ENCODE measurements at regions of chr14 and their contacts with region 1.

Region 1: GRCh38 chr14:72893636-72894321 is at the start of gene DPF3:
- DNase-seq: peak; percentile 99
- H3K4me3 ChIP-seq: peak within 1 kb of the TSS; percentile 97
- H3K27ac ChIP-seq: no peak within 1 kb of the TSS
- H3K4me1 ChIP-seq: peaks cover 18% of the 10 kb centered on the region
- H3K27me3 ChIP-seq: no peaks in the 10 kb centered on the region
- total RNA-seq, gene DPF3: 7.9 and 13.4 TPM in 2 replicates

Region 2: DNA sequence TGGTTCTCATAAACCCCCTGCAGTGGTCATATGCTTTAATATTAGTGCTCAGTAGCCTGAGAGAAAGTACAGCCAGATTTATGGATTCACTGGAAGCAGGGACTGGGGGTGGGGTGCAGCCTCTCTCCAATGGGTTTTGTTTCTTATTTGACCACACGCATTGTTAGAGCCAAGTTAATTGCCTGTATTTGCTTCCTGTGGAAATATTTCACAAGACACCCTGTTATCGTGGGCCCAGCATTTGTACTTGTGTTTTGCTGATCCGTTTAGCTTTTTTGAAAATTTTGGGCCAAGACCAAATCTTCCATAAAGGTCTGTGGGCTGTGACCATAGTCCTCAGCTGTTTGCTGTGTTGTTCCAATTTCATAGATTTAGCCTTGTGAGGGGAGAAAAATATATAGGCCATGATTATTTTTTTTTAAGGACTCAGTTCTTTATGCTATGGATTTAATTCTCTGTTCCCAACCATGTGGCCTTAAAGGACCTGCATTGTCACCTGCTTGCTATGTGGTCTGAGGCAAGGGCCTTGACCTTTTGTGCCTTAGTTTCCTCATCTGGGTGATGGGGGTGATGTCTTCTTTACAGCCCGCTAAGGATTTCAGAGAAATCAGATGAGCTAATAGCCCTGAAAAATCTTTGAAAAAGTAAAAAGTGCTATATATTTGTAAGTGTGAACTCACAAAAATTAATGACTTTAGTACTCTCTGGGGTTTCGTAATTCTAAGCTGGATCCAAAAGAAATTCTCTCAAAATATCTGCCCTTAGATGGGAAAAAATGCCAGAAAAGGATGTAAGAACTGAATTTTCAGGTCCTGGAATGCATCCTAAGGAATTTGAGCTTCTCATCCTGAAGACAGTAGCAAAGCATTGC is 370.1 kb before region 1 on chr14:
- in situ Hi-C with region 1: loop called (anchors 10 kb)
- DNase-seq: peak; percentile 46
- H3K4me3 ChIP-seq: no peak overlapping the region
- H3K27ac ChIP-seq: peak overlapping the region; percentile 6; the same call in 1 of the 2 replicates
- H3K4me1 ChIP-seq: peaks cover 59% of the 10 kb centered on the region
- H3K27me3 ChIP-seq: no peaks in the 10 kb centered on the region

Measured in GM23248 (cell line).